B cell (primary cell): ENCODE measurements at regions of chr7 and their contacts with region 1.

Region 1: DNA sequence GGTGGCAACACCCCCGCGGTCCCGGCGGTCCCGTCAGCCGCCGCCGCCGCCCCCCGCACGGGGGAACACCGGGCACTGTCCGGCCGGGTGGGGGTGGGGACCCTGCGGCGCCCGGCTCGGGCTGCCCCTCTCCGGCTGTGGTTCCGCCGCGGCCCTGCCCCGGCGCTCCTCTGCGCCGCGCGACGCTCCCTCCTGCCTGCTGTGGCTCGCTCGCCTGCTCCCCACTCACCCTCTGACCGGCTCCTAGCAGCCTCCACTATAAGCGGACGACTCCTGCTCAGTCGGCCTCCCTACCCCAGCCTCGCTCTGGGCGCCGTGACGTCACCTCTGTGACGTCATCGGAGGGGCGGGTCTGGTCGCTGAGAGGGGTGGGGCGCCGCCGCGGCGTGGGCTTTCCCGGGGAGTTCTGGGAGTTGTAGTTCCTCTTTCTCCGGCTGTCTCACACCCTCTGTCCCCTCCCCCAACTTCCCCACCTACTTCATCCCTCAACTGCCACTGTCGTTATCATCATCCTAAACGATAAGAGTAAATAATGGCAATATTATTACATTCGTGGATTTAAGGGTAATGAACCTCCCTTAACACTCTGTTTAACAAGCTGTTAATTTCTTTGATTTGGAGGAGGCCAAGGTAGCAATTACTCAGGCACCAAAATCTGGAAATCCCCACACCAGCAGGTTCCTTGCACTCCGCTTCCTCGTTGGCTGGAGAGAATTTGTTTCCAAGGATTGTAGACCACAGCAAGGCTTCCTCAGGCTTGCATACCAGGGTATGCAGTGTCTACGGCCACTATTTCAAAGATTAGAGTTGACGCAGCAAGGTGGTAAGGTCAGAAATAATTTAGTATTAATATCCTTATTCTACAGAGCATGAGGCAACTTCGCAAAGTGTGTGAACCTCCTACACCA is at the start of gene UBE2H:
- DNase-seq: peak; percentile 96
- ATAC-seq: peak; percentile 73
- H3K4me3 ChIP-seq: peak within 1 kb of the TSS; percentile 72 to 95 (median 93)
- H3K4me3 Mint-ChIP-seq: peak within 1 kb of the TSS; percentile 95
- H3K27ac ChIP-seq: peak within 1 kb of the TSS; percentile 87 to 94
- H3K27ac Mint-ChIP-seq: peak within 1 kb of the TSS; percentile 99
- H3K4me1 ChIP-seq: peaks cover 32 to 40% of the 10 kb centered on the region in 2 donors
- H3K4me1 Mint-ChIP-seq: peaks cover 16% of the 10 kb centered on the region
- H3K27me3 ChIP-seq: no peaks in the 10 kb centered on the region
- H3K27me3 Mint-ChIP-seq: no peaks in the 10 kb centered on the region
- CTCF ChIP-seq: no peak
- total RNA-seq, gene UBE2H: 43.6 and 54.1 TPM in 2 replicates

Region 2: DNA sequence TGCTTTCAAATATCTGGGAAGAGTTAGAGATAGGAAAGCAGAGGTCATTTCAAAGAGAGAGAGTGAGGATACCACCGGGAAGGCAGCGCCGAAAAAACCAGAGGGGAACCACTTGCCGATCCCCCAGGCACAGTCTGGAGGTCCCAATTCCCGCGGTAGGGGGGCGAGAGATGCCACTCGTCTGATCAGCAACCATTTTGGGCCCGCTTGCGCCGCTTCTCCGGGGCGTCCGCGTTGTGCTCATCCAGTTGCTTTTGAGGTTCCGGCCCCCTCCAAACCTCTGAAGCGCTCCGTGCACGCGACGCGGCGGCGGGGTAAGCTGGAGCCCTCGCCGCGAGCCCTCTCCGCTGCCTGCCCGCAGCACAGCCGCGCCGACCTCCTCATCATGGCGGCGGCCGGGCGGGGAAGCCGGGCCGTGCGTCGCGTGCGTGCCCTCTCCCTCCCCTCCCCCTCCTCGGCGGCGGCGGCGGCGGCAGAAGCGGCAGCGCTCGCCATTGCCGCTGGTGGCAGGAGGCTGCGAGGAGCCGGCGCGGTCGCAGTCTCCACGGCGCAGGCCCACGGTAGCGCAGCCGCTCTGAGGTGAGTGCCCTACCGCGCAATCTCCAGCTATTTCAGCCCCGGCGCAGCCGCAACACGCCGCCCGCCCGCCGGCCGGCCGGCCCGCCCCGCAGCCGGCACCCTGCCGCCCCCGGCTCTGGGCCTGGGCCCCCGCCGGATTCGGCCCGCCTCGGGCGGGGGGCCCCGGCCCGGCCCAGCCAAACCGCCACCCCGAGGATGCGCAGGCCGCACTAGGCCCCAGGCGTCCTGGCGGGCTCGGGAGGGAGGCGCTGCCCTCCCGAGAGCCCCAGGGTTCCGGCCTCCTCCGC is 341.4 kb before region 1 on chr7 and contains the start of gene NRF1:
- CTCF ChIA-PET with region 1: no interaction called
- POLR2A ChIA-PET with region 1: interaction called, 3 read pairs
- intact Hi-C with region 1: loop called (anchors 5 kb)
- DNase-seq: peak; percentile 96
- ATAC-seq: peak; percentile 87
- H3K4me3 ChIP-seq: peak within 1 kb of the TSS; percentile 70 to 97 (median 84)
- H3K4me3 Mint-ChIP-seq: peak within 1 kb of the TSS; percentile 97
- H3K27ac ChIP-seq: peak within 1 kb of the TSS; percentile 91 to 93
- H3K27ac Mint-ChIP-seq: peak within 1 kb of the TSS; percentile 97
- H3K4me1 ChIP-seq: peaks cover 47 to 53% of the 10 kb centered on the region in 2 donors
- H3K4me1 Mint-ChIP-seq: peaks cover 67% of the 10 kb centered on the region
- H3K27me3 ChIP-seq: no peaks in the 10 kb centered on the region
- H3K27me3 Mint-ChIP-seq: no peaks in the 10 kb centered on the region
- CTCF ChIP-seq: no peak
- total RNA-seq, gene NRF1: 49.2 and 53.0 TPM in 2 replicates

Region 3: GRCh38 chr7:129896568-129897382 is 56.1 kb before region 1 on chr7:
- CTCF ChIA-PET with region 1: interaction called, 4 read pairs
- POLR2A ChIA-PET with region 1: no interaction called
- intact Hi-C with region 1: loop called (anchors 10 kb)
- DNase-seq: no peak
- ATAC-seq: no peak
- H3K4me3 ChIP-seq: no peak overlapping the region
- H3K4me3 Mint-ChIP-seq: no peak overlapping the region
- H3K27ac ChIP-seq: no peak overlapping the region
- H3K27ac Mint-ChIP-seq: peak overlapping the region; percentile 29
- H3K4me1 ChIP-seq: peaks cover 32 to 50% of the 10 kb centered on the region in 2 donors
- H3K4me1 Mint-ChIP-seq: peaks cover 65% of the 10 kb centered on the region
- H3K27me3 ChIP-seq: no peaks in the 10 kb centered on the region
- H3K27me3 Mint-ChIP-seq: no peaks in the 10 kb centered on the region
- CTCF ChIP-seq: no peak

Region 4: GRCh38 chr7:129933627-129934026 is 19.3 kb before region 1 on chr7:
- CTCF ChIA-PET with region 1: interaction called, 3 read pairs
- POLR2A ChIA-PET with region 1: interaction called, 3 read pairs
- intact Hi-C with region 1: loop called (anchors 2 kb)
- DNase-seq: no peak
- ATAC-seq: no peak
- H3K4me3 ChIP-seq: no peak overlapping the region
- H3K4me3 Mint-ChIP-seq: no peak overlapping the region
- H3K27ac ChIP-seq: peak overlapping the region in 1 of 2 donors; percentile 72
- H3K27ac Mint-ChIP-seq: no peak overlapping the region
- H3K4me1 ChIP-seq: peaks cover 16 to 17% of the 10 kb centered on the region in 2 donors
- H3K4me1 Mint-ChIP-seq: peaks cover 18% of the 10 kb centered on the region
- H3K27me3 ChIP-seq: no peaks in the 10 kb centered on the region
- H3K27me3 Mint-ChIP-seq: no peaks in the 10 kb centered on the region
- CTCF ChIP-seq: no peak

Region 5: GRCh38 chr7:130050773-130051125 is 97.8 kb after region 1 on chr7:
- CTCF ChIA-PET with region 1: no interaction called
- POLR2A ChIA-PET with region 1: no interaction called
- intact Hi-C with region 1: loop called (anchors 5 kb)
- DNase-seq: no peak
- ATAC-seq: no peak
- H3K4me3 ChIP-seq: peak overlapping the region; percentile 73 to 91 (median 80)
- H3K4me3 Mint-ChIP-seq: peak overlapping the region; percentile 97
- H3K27ac ChIP-seq: peak overlapping the region in 1 of 2 donors; percentile 70
- H3K27ac Mint-ChIP-seq: peak overlapping the region; percentile 88
- H3K4me1 ChIP-seq: peaks cover 5 to 14% of the 10 kb centered on the region in 2 donors
- H3K4me1 Mint-ChIP-seq: peaks cover 9% of the 10 kb centered on the region
- H3K27me3 ChIP-seq: peaks cover 0 to 4% (median 0%) of the 10 kb centered on the region in 4 experiments
- H3K27me3 Mint-ChIP-seq: no peaks in the 10 kb centered on the region
- CTCF ChIP-seq: no peak

Region 6: GRCh38 chr7:130112093-130112492 is 159.2 kb after region 1 on chr7:
- CTCF ChIA-PET with region 1: no interaction called
- POLR2A ChIA-PET with region 1: no interaction called
- intact Hi-C with region 1: no loop called
- DNase-seq: no peak
- ATAC-seq: no peak
- H3K4me3 ChIP-seq: no peak overlapping the region
- H3K4me3 Mint-ChIP-seq: no peak overlapping the region
- H3K27ac ChIP-seq: no peak overlapping the region
- H3K27ac Mint-ChIP-seq: no peak overlapping the region
- H3K4me1 ChIP-seq: peaks cover 17 to 19% of the 10 kb centered on the region in 2 donors
- H3K4me1 Mint-ChIP-seq: peaks cover 31% of the 10 kb centered on the region
- H3K27me3 ChIP-seq: no peaks in the 10 kb centered on the region
- H3K27me3 Mint-ChIP-seq: no peaks in the 10 kb centered on the region
- CTCF ChIP-seq: no peak

Region 7: GRCh38 chr7:130305433-130306042 is 352.6 kb after region 1 on chr7:
- CTCF ChIA-PET with region 1: no interaction called
- POLR2A ChIA-PET with region 1: no interaction called
- intact Hi-C with region 1: no loop called
- DNase-seq: no peak
- ATAC-seq: no peak
- H3K4me3 ChIP-seq: no peak overlapping the region
- H3K4me3 Mint-ChIP-seq: no peak overlapping the region
- H3K27ac ChIP-seq: no peak overlapping the region
- H3K27ac Mint-ChIP-seq: no peak overlapping the region
- H3K4me1 ChIP-seq: no peaks in the 10 kb centered on the region
- H3K4me1 Mint-ChIP-seq: no peaks in the 10 kb centered on the region
- H3K27me3 ChIP-seq: peaks cover 0 to 4% (median 0%) of the 10 kb centered on the region in 4 experiments
- H3K27me3 Mint-ChIP-seq: peaks cover 16% of the 10 kb centered on the region
- CTCF ChIP-seq: no peak